Activated CD8-positive, alpha-beta T cell treated with anti-CD3 and anti-CD28 coated beads for 36 hours (primary cell): ENCODE measurements at regions of chr6 and their contacts with region 1.

Region 1: GRCh38 chr6:32933636-32934085 is 7.2 kb downstream of the HLA-DMB start:
- DNase-seq: peak; percentile 87
- ATAC-seq: peak; percentile 70
- H3K4me3 Mint-ChIP-seq: no peak overlapping the region
- H3K27ac Mint-ChIP-seq: no peak overlapping the region
- H3K4me1 Mint-ChIP-seq: peaks cover 14% of the 10 kb centered on the region
- H3K27me3 Mint-ChIP-seq: no peaks in the 10 kb centered on the region
- CTCF ChIP-seq: peak; percentile 81

Region 2: GRCh38 chr6:32885698-32886286 is 47.9 kb before region 1 on chr6:
- CTCF ChIA-PET with region 1: interaction called, 14 read pairs
- POLR2A ChIA-PET with region 1: no interaction called
- intact Hi-C with region 1: no loop called
- DNase-seq: no peak
- ATAC-seq: peak; percentile 70
- H3K4me3 Mint-ChIP-seq: no peak overlapping the region
- H3K27ac Mint-ChIP-seq: no peak overlapping the region
- H3K4me1 Mint-ChIP-seq: peaks cover 6% of the 10 kb centered on the region
- H3K27me3 Mint-ChIP-seq: no peaks in the 10 kb centered on the region
- CTCF ChIP-seq: peak; percentile 74

Region 3: GRCh38 chr6:32894080-32895005 is 39.3 kb before region 1 on chr6:
- CTCF ChIA-PET with region 1: interaction called, 15 read pairs
- POLR2A ChIA-PET with region 1: interaction called, 3 read pairs
- intact Hi-C with region 1: no loop called
- DNase-seq: peak; percentile 95
- ATAC-seq: peak; percentile 99
- H3K4me3 Mint-ChIP-seq: peak overlapping the region; percentile 96
- H3K27ac Mint-ChIP-seq: peak overlapping the region; percentile 96
- H3K4me1 Mint-ChIP-seq: peaks cover 35% of the 10 kb centered on the region
- H3K27me3 Mint-ChIP-seq: no peaks in the 10 kb centered on the region
- CTCF ChIP-seq: no peak

Region 4: GRCh38 chr6:32906539-32906938 is 27.1 kb before region 1 on chr6:
- CTCF ChIA-PET with region 1: interaction called, 12 read pairs
- POLR2A ChIA-PET with region 1: interaction called, 3 read pairs
- intact Hi-C with region 1: no loop called
- DNase-seq: no peak
- ATAC-seq: no peak
- H3K4me3 Mint-ChIP-seq: no peak overlapping the region
- H3K27ac Mint-ChIP-seq: no peak overlapping the region
- H3K4me1 Mint-ChIP-seq: no peaks in the 10 kb centered on the region
- H3K27me3 Mint-ChIP-seq: peaks cover 5% of the 10 kb centered on the region
- CTCF ChIP-seq: no peak

Region 5: GRCh38 chr6:32912951-32913350 is 20.7 kb before region 1 on chr6:
- CTCF ChIA-PET with region 1: interaction called, 64 read pairs
- POLR2A ChIA-PET with region 1: interaction called, 3 read pairs
- intact Hi-C with region 1: no loop called
- DNase-seq: no peak
- ATAC-seq: no peak
- H3K4me3 Mint-ChIP-seq: no peak overlapping the region
- H3K27ac Mint-ChIP-seq: no peak overlapping the region
- H3K4me1 Mint-ChIP-seq: no peaks in the 10 kb centered on the region
- H3K27me3 Mint-ChIP-seq: peaks cover 8% of the 10 kb centered on the region
- CTCF ChIP-seq: no peak

Region 6: GRCh38 chr6:32920715-32921114 is 12.9 kb before region 1 on chr6:
- CTCF ChIA-PET with region 1: interaction called, 64 read pairs
- POLR2A ChIA-PET with region 1: interaction called, 4 read pairs
- intact Hi-C with region 1: no loop called
- DNase-seq: no peak
- ATAC-seq: no peak
- H3K4me3 Mint-ChIP-seq: no peak overlapping the region
- H3K27ac Mint-ChIP-seq: no peak overlapping the region
- H3K4me1 Mint-ChIP-seq: no peaks in the 10 kb centered on the region
- H3K27me3 Mint-ChIP-seq: no peaks in the 10 kb centered on the region
- CTCF ChIP-seq: no peak

Region 7: DNA sequence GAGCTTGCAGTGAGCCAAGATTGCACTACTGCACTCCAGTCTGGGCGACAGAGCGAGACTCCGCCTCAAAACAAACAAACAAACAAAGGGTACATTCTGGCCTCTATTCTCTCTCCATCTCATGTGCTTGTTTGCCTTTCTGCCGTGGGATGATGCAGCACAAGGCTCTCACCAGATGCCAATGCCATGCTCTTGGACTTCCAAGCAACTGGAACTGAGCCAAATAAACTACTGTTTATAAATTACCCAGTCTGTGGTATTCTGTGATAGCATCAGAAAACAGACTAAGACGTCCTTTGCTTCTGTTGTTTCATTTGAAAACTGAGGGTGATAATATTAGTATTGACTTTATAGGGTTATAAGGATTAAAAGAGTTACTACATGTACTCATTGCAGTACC is 31.1 kb after region 1 on chr6:
- CTCF ChIA-PET with region 1: interaction called, 82 read pairs
- POLR2A ChIA-PET with region 1: interaction called, 392 read pairs
- intact Hi-C with region 1: no loop called
- DNase-seq: no peak
- ATAC-seq: no peak
- H3K4me3 Mint-ChIP-seq: no peak overlapping the region
- H3K27ac Mint-ChIP-seq: no peak overlapping the region
- H3K4me1 Mint-ChIP-seq: peaks cover 47% of the 10 kb centered on the region
- H3K27me3 Mint-ChIP-seq: no peaks in the 10 kb centered on the region
- CTCF ChIP-seq: no peak